ENCODE measurements at regions of chr5 and their contacts with region 1.

Region 1: DNA sequence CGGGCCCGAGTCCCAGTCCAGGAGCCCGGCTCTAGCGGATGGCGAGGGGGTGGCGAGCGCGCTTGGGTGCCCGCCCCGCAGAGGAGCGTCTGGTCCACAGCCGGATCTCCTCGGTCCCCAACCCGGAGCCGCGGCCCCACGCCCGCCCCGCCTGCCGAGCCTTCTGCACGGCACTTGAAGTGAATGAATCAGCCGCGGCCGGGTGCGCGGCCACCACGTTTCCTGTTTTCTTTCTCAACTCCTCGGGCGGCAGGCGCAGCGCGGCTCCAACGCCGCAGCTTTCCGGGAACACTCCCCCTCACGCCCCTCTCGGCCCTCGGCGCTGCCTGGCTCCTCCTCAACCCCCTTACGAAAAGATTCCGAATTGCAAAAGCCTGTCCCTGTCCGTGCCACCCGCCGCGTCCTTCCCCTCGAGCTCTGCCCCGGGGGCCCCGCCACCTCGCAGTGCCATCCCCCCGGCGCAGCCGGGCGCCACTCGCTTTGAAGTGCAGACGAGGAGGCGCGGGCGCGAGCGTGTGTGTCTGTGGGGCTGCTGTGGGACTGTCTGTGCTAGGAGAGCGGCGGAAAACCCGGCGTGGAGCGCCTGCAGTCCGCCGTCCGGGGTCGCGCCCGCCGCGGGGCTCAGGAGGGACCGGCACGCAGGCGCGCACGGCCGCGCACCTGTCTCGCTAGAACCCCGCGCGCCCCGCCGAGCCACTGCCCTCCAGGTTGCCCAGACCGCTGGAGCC is 456.6 kb downstream of the RAB3C start:
- DNase-seq: peak; percentile 61 to 63
- H3K4me3 ChIP-seq: peak overlapping the region; percentile 97
- H3K27ac ChIP-seq: peak overlapping the region; percentile 18; the same call in 1 of the 2 replicates
- H3K4me1 ChIP-seq: peaks cover 66% of the 10 kb centered on the region
- H3K27me3 ChIP-seq: no peaks in the 10 kb centered on the region
- CTCF ChIP-seq: no peak

Region 2: GRCh38 chr5:59126708-59127573 is 87.5 kb after region 1 on chr5:
- CTCF ChIA-PET with region 1: interaction called, 3 read pairs
- POLR2A ChIA-PET with region 1: no interaction called
- intact Hi-C with region 1: loop called (anchors 1 kb)
- DNase-seq: peak in 1 of 2 experiments; percentile 28
- H3K4me3 ChIP-seq: no peak overlapping the region
- H3K27ac ChIP-seq: no peak overlapping the region
- H3K4me1 ChIP-seq: peaks cover 11% of the 10 kb centered on the region; the same call in 1 of the 2 replicates
- H3K27me3 ChIP-seq: no peaks in the 10 kb centered on the region
- CTCF ChIP-seq: no peak

Region 3: GRCh38 chr5:59174248-59174844 is 134.9 kb after region 1 on chr5:
- CTCF ChIA-PET with region 1: interaction called, 4 read pairs
- POLR2A ChIA-PET with region 1: no interaction called
- intact Hi-C with region 1: loop called (anchors 1 kb)
- DNase-seq: peak; percentile 14 to 40
- H3K4me3 ChIP-seq: no peak overlapping the region
- H3K27ac ChIP-seq: no peak overlapping the region
- H3K4me1 ChIP-seq: no peaks in the 10 kb centered on the region
- H3K27me3 ChIP-seq: no peaks in the 10 kb centered on the region
- CTCF ChIP-seq: peak; percentile 87

Measured in PC-9 (cell line).